GM13977 (cell line): ENCODE measurements at regions of chr11 and their contacts with region 1.

Region 1: DNA sequence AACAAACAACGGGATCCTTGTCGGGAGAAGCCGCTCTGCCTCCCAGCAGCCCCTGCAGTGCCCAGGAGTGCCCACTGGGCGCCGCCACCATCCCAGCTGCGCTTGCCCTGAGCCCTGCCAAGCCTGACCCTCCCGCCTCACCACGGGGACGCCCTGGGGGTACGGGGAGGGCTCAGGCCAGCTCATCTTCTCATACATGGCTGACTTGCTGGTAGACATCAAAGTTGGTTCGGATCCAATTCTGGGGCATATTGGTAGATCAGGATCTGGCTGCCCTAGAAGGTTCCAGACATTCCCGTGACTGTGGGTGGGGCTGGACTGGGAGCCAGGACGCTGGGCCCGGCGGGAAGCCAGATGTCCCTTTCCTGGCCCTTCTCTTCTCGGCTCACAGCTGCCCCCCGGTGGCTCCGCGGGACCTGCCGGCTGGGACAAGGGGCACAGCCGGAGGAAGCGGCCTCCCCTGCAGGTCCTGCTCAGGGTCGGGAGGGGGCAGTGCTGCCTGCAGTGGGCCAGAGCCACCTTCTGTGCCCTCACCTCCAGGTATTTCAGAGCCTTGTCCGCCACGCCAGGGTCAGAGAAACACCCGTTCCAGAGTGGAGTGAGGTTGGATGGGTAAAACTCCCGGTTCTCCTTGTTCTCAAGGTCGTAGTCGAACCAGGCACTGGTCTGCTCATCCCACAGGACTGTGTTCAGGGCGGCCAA is 10.6 kb upstream of the TREH start:
- DNase-seq: peak; percentile 90
- CTCF ChIP-seq: peak; percentile 99

Region 2: GRCh38 chr11:118851970-118852369 is 162.0 kb after region 1 on chr11:
- in situ Hi-C with region 1: no loop called
- DNase-seq: peak; percentile 67
- CTCF ChIP-seq: no peak

Region 3: DNA sequence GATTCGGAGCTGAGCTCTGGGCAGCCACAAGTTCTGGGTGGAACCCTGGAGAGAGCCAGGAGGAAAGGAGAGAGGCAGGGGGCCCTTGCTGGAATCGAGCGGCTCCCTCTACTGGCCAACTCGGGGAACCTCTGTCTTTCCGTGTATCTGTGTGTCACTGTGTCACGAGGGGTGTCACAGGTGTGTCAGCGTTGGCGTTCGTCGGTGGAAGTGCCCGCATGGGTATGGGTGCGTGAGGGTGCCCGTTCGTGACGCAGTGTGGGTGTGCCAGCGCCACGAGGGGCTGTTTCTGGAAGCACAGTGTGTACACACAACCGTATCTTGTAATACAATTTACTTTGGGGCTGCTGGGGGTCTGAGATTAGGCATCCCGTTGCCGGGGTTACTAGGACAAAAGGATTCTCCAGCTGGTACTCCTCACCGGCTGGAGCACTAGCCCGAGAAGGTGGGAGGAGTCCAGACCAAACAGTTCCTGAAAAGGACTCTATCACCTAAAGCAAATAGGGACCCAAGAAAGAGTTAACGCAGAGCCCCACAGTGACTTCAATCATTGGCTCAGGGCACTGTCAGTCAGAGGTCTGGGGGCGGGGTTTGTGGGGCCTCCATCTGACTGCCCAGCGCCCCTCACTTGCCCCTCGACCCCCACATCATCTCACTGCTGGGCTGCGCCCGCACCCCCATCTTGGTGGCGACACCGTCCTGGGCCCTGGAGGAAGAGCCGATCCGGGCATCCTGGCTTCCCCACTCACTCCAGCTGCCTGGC is 238.3 kb after region 1 on chr11:
- in situ Hi-C with region 1: loop called (anchors 25 kb)
- DNase-seq: peak; percentile 95
- CTCF ChIP-seq: peak; percentile 88